ENCODE measurements at regions of chr1 and their contacts with region 1.

Region 1: DNA sequence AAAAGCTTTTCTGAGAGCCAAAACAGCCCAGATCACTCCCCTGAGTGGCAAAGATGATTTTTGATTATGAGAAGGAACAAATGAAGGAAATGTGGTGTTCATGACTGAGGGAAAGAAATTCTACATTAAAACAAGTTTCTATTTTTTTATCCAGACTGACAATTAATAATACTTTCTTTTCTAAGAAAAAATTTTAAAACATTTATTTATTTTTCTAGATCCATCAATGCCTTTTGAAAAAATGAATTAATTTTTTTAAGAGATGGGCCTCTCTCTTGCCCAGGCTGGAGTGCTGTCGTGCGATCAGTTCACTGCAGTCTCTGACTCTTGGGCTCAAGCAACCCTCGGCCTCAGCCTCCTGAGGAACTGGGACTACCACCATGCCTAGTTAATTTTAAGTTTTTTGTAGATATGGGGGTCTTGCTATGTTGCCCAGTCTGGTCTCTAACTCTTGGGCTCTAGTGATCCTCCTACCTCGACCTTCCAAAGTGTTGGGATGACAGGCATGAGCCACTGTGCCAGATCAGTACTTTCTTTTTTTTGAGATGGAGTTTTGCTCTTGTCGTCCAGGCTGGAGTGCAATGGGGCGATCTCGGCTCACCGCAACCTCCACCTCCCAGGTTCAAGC is 11.2 kb upstream of the TXNIP start:
- DNase-seq: no peak
- H3K4me3 Mint-ChIP-seq: no peak overlapping the region
- H3K27ac Mint-ChIP-seq: peak overlapping the region; percentile 81
- H3K4me1 Mint-ChIP-seq: peaks cover 45% of the 10 kb centered on the region
- H3K27me3 Mint-ChIP-seq: no peaks in the 10 kb centered on the region

Region 2: DNA sequence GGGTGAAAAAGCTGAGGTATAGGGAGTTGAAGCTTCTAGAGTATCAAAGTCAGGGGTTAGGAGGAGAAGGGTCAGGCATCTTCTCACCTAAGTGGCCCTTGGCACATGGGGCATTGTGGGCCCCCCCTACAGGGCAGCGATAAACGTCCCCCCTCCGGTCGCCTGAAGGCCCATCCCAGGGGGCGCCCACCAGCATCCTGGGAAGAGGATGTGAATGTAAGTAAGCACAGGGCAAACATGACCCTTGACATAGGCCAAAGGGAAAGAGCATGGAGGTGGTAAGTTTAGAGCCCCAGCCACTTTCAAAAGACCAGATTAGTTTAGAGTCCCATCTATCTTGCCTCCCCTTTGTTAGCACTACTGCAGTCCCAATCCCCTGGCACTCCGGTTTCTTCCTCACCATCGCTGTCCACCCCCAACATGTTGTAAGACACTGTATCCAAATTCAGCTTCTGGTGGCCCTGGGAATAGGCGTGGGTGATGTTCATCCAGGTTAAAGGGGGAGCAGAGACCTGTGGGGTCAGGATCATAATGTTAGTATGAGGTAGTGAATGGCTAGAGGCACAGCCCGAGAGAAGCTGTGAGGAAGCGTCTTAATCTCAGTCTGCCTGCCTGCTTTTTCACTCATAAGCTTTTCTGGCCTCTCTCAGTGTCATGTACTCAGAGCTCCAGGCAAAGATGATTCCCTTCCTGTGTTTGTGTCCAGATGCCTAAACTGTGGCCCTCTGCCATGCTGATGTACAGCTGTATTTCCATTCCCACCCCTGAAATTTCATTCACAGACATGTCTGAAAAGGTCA is 100.5 kb before region 1 on chr1:
- CTCF ChIA-PET with region 1: no interaction called
- POLR2A ChIA-PET with region 1: no interaction called
- DNase-seq: no peak
- H3K4me3 Mint-ChIP-seq: no peak overlapping the region
- H3K27ac Mint-ChIP-seq: no peak overlapping the region
- H3K4me1 Mint-ChIP-seq: peaks cover 6% of the 10 kb centered on the region
- H3K27me3 Mint-ChIP-seq: no peaks in the 10 kb centered on the region

Region 3: DNA sequence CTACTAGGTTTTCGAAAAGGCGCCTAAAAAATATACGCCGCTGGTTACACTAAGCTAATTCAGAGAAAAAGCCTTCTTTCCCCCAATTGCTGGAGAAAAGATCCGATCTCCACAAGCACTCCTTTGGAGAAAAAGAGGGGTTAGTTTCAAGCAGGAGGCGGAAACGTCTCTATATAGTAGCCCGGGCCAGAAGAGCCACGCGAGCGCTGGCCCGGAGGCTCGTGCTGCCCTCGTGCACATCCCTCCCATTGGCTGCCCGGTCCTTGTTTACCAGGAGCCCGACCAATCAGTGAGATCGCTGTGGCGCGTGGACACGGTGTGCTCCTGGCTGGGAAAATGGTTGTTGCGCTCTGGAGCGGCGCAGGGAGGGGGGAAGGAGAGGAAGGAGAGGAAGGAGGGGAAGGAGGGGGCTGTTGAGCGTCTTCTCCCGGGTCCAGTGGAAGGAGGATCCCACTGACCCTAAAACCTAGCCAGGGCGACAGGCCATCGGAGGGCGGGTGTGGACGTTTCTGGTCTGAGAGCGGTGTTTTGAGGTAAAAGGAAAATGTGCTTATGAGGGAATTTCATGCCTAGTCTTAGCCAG is 11.1 kb before region 1 on chr1 and contains the start of gene TXNIP:
- CTCF ChIA-PET with region 1: interaction called, 13 read pairs
- POLR2A ChIA-PET with region 1: no interaction called
- DNase-seq: peak; percentile 96
- H3K4me3 Mint-ChIP-seq: peak within 1 kb of the TSS; percentile 94
- H3K27ac Mint-ChIP-seq: peak within 1 kb of the TSS; percentile 99
- H3K4me1 Mint-ChIP-seq: peaks cover 62% of the 10 kb centered on the region
- H3K27me3 Mint-ChIP-seq: no peaks in the 10 kb centered on the region
- total RNA-seq, gene TXNIP: 240 to 262 TPM

Measured in activated CD4-positive, alpha-beta T cell treated with anti-CD3 and anti-CD28 coated beads, Interleukin-2, amount 10 ng/mL, durations not matched to agents 7 days and 5 days (primary cell).